ENCODE measurements at regions of chr6 and their contacts with region 1.

Region 1: GRCh38 chr6:130843575-130844320 is 16.5 kb downstream of the SMLR1 start:
- DNase-seq: peak in 7 of 9 donors; percentile 30 to 74 (median 52)
- ATAC-seq: peak; percentile 90
- H3K4me3 ChIP-seq: no peak overlapping the region
- H3K4me3 Mint-ChIP-seq: no peak overlapping the region
- H3K27ac ChIP-seq: no peak overlapping the region
- H3K27ac Mint-ChIP-seq: peak overlapping the region in 1 of 9 donors; percentile 51
- H3K4me1 ChIP-seq: no peaks in the 10 kb centered on the region
- H3K4me1 Mint-ChIP-seq: peaks cover 0 to 7% (median 0%) of the 10 kb centered on the region in 7 donors
- H3K27me3 ChIP-seq: no peaks in the 10 kb centered on the region
- H3K27me3 Mint-ChIP-seq: no peaks in the 10 kb centered on the region

Region 2: DNA sequence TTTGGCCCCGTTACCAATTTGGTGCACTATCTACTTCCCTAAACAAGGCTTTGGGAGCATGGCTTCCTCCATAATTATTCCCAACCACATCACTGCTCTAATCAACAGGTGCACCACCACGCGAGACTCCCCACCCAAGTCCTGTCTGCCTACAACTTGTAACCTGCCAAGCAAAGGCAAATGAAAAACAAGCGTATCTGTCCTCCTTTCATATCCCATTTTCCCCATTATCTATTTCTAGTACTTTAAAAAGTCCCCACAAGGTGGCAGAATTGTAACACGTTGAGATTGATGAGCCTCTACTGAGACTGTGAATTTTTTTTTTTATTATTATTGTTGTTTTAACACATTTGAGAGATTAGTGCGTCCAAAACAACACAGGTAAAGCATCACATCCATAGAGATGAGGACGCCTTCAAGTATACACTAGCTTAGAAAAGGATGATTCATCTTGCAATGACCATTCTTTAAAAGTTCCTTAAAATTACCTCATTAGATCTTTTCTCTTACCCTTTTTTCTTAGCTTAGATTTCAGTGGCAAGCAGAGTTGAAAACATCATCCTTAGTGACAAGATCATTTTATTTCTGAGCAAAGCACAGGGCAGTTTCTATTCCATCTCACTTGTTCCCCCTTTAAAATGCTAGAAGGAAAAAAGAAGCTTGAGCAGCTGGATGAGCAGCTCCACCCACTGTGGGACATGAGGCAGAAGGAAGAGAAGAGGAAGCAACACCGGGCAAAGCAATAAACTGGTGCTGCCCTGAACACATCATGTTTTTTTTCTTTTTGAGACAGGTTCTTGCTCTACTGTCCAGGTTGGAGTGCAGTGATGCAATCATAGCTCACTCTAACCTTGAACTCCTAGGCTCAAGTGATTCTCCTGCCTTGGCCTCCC is 1344.6 kb before region 1 on chr6:
- CTCF ChIA-PET with region 1: no interaction called
- POLR2A ChIA-PET with region 1: no interaction called
- intact Hi-C with region 1: loop called in 1 of 2 experiments (anchors 10 kb)
- DNase-seq: peak in 7 of 9 donors; percentile 25 to 60 (median 52)
- ATAC-seq: peak; percentile 82
- H3K4me3 ChIP-seq: peak overlapping the region; percentile 37
- H3K4me3 Mint-ChIP-seq: peak overlapping the region; percentile 23 to 81 (median 64)
- H3K27ac ChIP-seq: no peak overlapping the region
- H3K27ac Mint-ChIP-seq: peak overlapping the region in 7 of 9 donors; percentile 0 to 62 (median 2)
- H3K4me1 ChIP-seq: peaks cover 0 to 5% of the 10 kb centered on the region in 2 donors
- H3K4me1 Mint-ChIP-seq: peaks cover 9 to 43% (median 18%) of the 10 kb centered on the region in 7 donors
- H3K27me3 ChIP-seq: no peaks in the 10 kb centered on the region
- H3K27me3 Mint-ChIP-seq: no peaks in the 10 kb centered on the region

Region 3: DNA sequence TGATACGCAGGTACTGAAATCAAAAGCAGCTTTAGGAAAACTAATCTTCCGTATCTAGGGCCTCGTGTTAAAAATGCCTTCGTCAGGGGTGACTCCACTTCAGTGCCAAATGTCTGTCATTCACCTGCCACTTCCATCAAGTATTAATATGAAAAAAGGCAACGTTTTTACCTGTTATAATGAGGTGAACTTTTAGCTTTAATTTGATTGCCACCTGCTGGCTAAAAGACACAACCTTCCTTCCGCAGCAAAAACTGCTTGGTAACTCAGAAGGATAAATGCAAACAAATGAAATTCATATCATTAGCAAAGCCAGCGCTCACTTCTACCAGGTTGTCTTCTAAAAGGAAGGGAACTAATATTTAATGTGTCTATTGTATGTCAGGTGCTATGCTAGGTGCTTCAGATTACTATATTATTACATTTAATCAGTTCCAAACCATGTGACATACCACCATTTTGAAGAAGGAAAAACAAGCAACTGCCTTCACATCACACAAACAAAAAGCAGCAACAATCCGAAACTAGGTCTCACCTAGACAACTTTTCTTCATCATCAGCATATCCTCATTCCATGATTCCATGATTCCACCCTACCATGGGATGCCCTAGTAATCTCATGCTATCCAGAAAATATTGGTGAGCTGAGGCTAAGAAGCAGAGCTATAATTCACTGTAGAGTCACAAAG is 1113.1 kb before region 1 on chr6:
- CTCF ChIA-PET with region 1: no interaction called
- POLR2A ChIA-PET with region 1: no interaction called
- intact Hi-C with region 1: loop called (anchors 5 kb)
- DNase-seq: peak in 7 of 9 donors; percentile 22 to 62 (median 50)
- ATAC-seq: peak; percentile 66
- H3K4me3 ChIP-seq: no peak overlapping the region
- H3K4me3 Mint-ChIP-seq: no peak overlapping the region
- H3K27ac ChIP-seq: no peak overlapping the region
- H3K27ac Mint-ChIP-seq: peak overlapping the region in 4 of 9 donors; percentile 46 to 70 (median 50)
- H3K4me1 ChIP-seq: no peaks in the 10 kb centered on the region
- H3K4me1 Mint-ChIP-seq: peaks cover 0 to 13% (median 3%) of the 10 kb centered on the region in 7 donors
- H3K27me3 ChIP-seq: no peaks in the 10 kb centered on the region
- H3K27me3 Mint-ChIP-seq: no peaks in the 10 kb centered on the region

Region 4: GRCh38 chr6:130037207-130037811 is 806.4 kb before region 1 on chr6:
- CTCF ChIA-PET with region 1: interaction called, 5 read pairs
- POLR2A ChIA-PET with region 1: no interaction called
- intact Hi-C with region 1: loop called (anchors 1 to 5 kb)
- DNase-seq: peak in 4 of 9 donors; percentile 18 to 41 (median 34)
- ATAC-seq: peak; percentile 68
- H3K4me3 ChIP-seq: no peak overlapping the region
- H3K4me3 Mint-ChIP-seq: no peak overlapping the region
- H3K27ac ChIP-seq: no peak overlapping the region
- H3K27ac Mint-ChIP-seq: peak overlapping the region in 1 of 9 donors; percentile 10
- H3K4me1 ChIP-seq: peaks cover 0 to 5% of the 10 kb centered on the region in 2 donors
- H3K4me1 Mint-ChIP-seq: peaks cover 31 to 90% (median 74%) of the 10 kb centered on the region in 7 donors
- H3K27me3 ChIP-seq: no peaks in the 10 kb centered on the region
- H3K27me3 Mint-ChIP-seq: no peaks in the 10 kb centered on the region

Region 5: DNA sequence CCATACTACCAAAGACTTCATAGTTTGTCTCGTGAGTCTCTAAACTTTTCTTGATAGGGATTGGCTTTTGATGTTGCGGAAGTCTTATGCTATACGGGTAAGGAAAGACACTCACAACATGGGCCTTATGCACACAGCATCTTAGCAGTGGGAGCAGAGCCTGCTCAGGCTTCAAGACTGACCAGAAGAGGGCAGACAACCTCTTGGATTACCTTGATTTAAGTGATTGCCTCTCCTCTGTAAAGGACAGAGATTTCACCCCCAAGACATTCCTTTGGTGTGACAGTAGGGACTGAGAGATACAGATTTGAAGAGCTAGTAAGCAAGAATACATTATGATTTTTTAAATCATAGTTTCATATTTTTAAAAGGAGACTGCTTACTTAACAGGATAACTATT is 549.9 kb before region 1 on chr6:
- CTCF ChIA-PET with region 1: no interaction called
- POLR2A ChIA-PET with region 1: no interaction called
- intact Hi-C with region 1: loop called (anchors 1 kb)
- DNase-seq: peak in 5 of 9 donors; percentile 24 to 53 (median 46)
- ATAC-seq: peak; percentile 73
- H3K4me3 ChIP-seq: no peak overlapping the region
- H3K4me3 Mint-ChIP-seq: no peak overlapping the region
- H3K27ac ChIP-seq: no peak overlapping the region
- H3K27ac Mint-ChIP-seq: peak overlapping the region in 1 of 9 donors; percentile 53
- H3K4me1 ChIP-seq: no peaks in the 10 kb centered on the region
- H3K4me1 Mint-ChIP-seq: peaks cover 0 to 3% (median 0%) of the 10 kb centered on the region in 7 donors
- H3K27me3 ChIP-seq: no peaks in the 10 kb centered on the region
- H3K27me3 Mint-ChIP-seq: peaks cover 0 to 27% (median 3%) of the 10 kb centered on the region in 5 donors

Region 6: GRCh38 chr6:130365166-130366106 is 478.3 kb before region 1 on chr6 and contains the start of gene TMEM200A:
- CTCF ChIA-PET with region 1: no interaction called
- POLR2A ChIA-PET with region 1: no interaction called
- intact Hi-C with region 1: loop called in 1 of 2 experiments (anchors 1 kb)
- DNase-seq: peak in 6 of 9 donors; percentile 7 to 63 (median 21)
- ATAC-seq: peak; percentile 64
- H3K4me3 ChIP-seq: peak within 1 kb of the TSS; percentile 68
- H3K4me3 Mint-ChIP-seq: peak within 1 kb of the TSS; percentile 66 to 90 (median 83)
- H3K27ac ChIP-seq: no peak within 1 kb of the TSS
- H3K27ac Mint-ChIP-seq: peak within 1 kb of the TSS in 2 of 9 donors; percentile 55 to 64
- H3K4me1 ChIP-seq: peaks cover 4 to 5% of the 10 kb centered on the region in 2 donors
- H3K4me1 Mint-ChIP-seq: peaks cover 7 to 26% (median 17%) of the 10 kb centered on the region in 7 donors
- H3K27me3 ChIP-seq: no peaks in the 10 kb centered on the region
- H3K27me3 Mint-ChIP-seq: peaks cover 7 to 64% (median 38%) of the 10 kb centered on the region in 5 donors
- total RNA-seq, gene TMEM200A: 0.19 to 7.2 (median 0.99) TPM in 4 of 5 experiments, not detected in the other

Measured in naive thymus-derived CD4-positive, alpha-beta T cell (primary cell).